ENCODE measurements at regions of chr7 and their contacts with region 1.

Region 1: GRCh38 chr7:26857510-26858240 is 6.7 kb downstream of the SKAP2 start:
- DNase-seq: peak; percentile 59 to 69 (median 64)
- ATAC-seq: peak; percentile 62
- H3K4me3 ChIP-seq: no peak overlapping the region
- H3K4me1 ChIP-seq: peaks cover 15% of the 10 kb centered on the region
- CTCF ChIP-seq: no peak

Region 2: DNA sequence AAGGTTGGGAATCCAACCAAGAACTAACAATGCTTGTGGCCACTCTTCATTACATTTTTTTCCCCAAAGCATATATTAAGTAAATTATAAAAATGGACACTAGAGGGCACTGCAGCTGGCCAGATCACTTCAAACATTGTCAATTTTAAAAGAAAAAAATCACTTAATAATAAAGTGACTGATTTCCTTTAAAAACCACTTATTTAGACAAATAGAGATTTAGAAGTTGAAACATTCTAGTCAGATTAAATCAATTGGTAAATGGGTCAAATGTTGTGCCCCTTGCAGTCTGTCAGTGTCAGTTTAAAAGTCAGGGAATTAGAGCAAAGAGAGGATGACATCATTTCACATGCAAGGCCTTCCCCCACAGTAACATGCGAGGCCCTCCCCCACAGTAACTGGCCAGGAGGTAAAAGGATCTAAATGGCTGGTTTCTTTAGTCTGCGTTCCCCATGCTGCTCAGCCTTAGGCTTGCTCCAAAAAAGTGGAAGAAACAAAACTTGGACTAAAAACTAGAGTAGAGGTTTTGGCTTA is 171.2 kb before region 1 on chr7:
- intact Hi-C with region 1: no loop called
- DNase-seq: peak in 1 of 3 donors; percentile 42
- ATAC-seq: peak; percentile 41
- H3K4me3 ChIP-seq: no peak overlapping the region
- H3K4me1 ChIP-seq: peaks cover 7% of the 10 kb centered on the region
- CTCF ChIP-seq: peak; percentile 52

Region 3: GRCh38 chr7:27010068-27010467 is 152.4 kb after region 1 on chr7:
- intact Hi-C with region 1: no loop called
- DNase-seq: no peak
- ATAC-seq: no peak
- H3K4me3 ChIP-seq: no peak overlapping the region
- H3K4me1 ChIP-seq: no peaks in the 10 kb centered on the region
- CTCF ChIP-seq: no peak

Region 4: DNA sequence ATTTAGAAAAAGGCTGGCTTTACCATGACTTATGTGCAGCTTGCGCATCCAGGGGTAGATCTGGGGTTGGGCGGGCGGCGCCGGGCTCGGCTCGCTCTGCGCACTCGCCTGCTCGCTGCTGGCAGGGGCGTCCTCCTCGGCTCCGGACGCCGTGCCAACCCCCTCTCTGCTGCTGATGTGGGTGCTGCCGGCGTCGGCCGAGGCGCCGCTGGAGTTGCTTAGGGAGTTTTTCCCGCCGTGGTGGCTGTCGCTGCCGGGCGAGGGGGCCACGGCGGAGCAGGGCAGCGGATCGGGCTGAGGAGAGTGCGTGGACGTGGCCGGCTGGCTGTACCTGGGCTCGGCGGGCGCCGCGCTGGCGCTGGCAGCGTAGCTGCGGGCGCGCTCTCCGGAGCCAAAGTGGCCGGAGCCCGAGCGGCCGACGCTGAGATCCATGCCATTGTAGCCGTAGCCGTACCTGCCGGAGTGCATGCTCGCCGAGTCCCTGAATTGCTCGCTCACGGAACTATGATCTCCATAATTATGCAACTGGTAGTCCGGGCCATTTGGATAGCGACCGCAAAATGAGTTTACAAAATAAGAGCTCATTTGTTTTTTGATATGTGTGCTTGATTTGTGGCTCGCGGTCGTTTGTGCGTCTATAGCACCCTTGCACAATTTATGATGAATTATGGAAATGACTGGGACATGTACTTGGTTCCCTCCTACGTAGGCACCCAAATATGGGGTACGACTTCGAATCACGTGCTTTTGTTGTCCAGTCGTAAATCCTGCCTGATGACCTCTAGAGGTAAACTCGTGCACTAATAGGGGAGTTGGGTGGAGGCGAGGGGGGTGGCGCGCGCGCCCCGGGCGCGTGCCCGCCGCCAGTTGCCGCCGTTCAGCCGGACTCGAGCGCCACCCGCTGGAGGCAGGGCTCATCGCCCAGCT is 285.6 kb after region 1 on chr7 and contains the start of gene HOXA5:
- intact Hi-C with region 1: loop called in 1 of 2 experiments (anchors 5 kb)
- DNase-seq: peak; percentile 84 to 88 (median 84)
- ATAC-seq: peak; percentile 57
- H3K4me3 ChIP-seq: peak within 1 kb of the TSS; percentile 28
- H3K4me1 ChIP-seq: peaks cover 28% of the 10 kb centered on the region
- CTCF ChIP-seq: peak; percentile 66
- total RNA-seq, gene HOXA5: 16.1 to 26.6 (median 23.8) TPM